K562 (cell line): ENCODE measurements at regions of chr18 and their contacts with region 1.

Region 1: GRCh38 chr18:59814891-59815290 is 84.9 kb upstream of the PMAIP1 start:
- DNase-seq: no peak
- ATAC-seq: no peak
- H3K4me3 ChIP-seq: no peak overlapping the region
- H3K27ac ChIP-seq: no peak overlapping the region
- H3K4me1 ChIP-seq: no peaks in the 10 kb centered on the region
- H3K27me3 ChIP-seq: no peaks in the 10 kb centered on the region; a peak in 1 of 5 replicates
- CTCF ChIP-seq: no peak
- EP300 ChIP-seq: no peak
- POLR2A ChIP-seq: no peak
- RAD21 ChIP-seq: no peak

Region 2: DNA sequence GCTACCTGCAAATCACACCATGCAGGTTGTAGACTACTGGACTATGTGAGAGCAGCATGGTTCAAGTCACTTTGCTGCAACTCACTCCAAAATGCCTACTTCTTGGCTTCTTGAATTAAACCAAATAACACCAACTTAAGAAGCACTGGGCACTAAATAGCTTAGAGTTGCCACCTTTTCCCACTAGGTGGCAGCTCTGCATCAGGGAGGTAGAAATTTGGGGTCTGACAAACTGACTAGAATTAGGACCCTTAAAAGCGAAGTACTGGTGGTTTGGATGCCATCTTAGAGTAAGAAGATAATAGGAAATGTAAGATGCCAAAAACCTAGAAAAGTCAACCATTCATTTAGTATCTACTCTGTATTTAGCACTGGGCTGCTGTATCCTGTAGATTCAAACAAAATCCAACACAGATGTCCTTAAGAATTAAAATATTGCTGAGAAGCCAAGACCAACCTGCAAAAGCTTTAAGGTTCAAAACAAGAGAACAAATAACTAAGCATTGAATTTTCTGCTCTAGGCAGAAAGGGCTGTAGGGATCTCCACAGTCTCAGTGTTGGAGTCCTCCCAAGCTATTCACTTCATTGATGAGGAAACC is 183.2 kb before region 1 on chr18:
- CTCF ChIA-PET with region 1: no interaction called
- POLR2A ChIA-PET with region 1: no interaction called
- in situ Hi-C with region 1: loop called (anchors 10 kb)
- intact Hi-C with region 1: no loop called
- DNase-seq: peak in 2 of 4 experiments; percentile 9 to 10
- ATAC-seq: no peak
- H3K4me3 ChIP-seq: no peak overlapping the region
- H3K27ac ChIP-seq: no peak overlapping the region
- H3K4me1 ChIP-seq: no peaks in the 10 kb centered on the region
- H3K27me3 ChIP-seq: no peaks in the 10 kb centered on the region; a peak in 1 of 5 replicates
- CTCF ChIP-seq: peak in 2 of 3 experiments; percentile 23 to 34; a peak in 4 of 6 replicates
- EP300 ChIP-seq: no peak
- POLR2A ChIP-seq: no peak
- RAD21 ChIP-seq: peak in 1 of 2 experiments; percentile 39; a peak in 3 of 4 replicates

Region 3: DNA sequence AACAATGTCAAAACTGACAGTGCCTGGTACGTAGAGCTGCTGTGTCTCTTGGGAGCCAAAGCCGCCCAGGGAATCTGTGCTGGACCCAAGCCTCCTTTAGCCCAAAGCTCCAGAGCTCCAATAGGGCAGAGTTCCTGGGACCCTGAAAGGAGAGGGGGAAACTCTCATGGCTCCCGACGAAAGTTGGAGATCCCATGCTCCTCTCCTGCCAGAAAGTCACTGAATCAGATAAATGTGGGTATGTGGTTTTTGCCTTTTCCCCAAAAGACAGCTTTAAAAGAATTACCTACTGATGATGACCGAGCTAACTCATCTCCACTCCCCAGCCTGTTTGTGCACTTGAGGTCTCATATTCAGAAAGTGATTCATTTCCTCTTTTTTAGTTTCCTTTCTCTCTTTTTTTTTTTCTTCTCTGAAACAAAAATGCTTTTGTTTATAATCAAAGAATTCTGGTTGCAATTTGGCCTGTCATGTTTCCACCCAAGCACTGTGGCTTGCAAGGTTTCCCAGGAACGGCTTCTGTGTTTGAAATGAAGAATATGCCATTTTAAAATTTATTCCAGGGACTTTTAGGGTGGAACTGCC is 70.8 kb after region 1 on chr18:
- CTCF ChIA-PET with region 1: no interaction called
- POLR2A ChIA-PET with region 1: no interaction called
- in situ Hi-C with region 1: no loop called
- intact Hi-C with region 1: no loop called
- DNase-seq: no peak
- ATAC-seq: no peak
- H3K4me3 ChIP-seq: no peak overlapping the region
- H3K27ac ChIP-seq: no peak overlapping the region
- H3K4me1 ChIP-seq: peaks cover 8 to 24% of the 10 kb centered on the region in 2 experiments; a peak in 4 of 5 replicates
- H3K27me3 ChIP-seq: no peaks in the 10 kb centered on the region
- CTCF ChIP-seq: no peak
- EP300 ChIP-seq: no peak
- POLR2A ChIP-seq: no peak
- RAD21 ChIP-seq: no peak